PC-9 (cell line): ENCODE measurements at regions of chr17 and their contacts with region 1.

Region 1: DNA sequence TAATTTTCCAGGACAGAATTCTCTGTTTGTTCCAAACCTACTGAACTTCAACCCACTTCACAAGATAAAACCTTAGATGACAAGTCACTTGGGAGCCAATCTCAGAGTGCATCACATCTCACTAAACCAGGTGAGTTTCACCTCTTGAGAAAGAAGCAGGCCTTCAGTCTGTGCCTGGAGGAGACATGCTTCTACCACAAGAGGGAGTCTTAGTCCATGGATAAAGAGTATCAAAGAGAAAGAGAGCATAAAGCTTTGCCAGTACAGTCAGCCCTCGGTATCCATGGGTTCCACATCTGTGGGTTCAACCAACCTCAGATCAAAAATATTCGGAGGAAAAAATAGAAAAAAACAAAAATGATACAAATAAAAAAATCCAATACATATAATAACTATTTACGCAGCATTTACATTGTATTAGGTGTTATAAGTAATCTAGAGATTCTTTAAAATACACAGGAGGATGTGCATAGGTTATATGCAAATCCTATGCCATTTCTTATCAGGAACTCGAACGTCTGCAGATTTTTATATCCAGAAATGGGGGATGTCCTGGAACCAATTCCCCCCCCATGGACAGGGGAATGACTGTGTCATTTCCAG is 37.7 kb downstream of the DUSP14 start:
- DNase-seq: peak in 1 of 2 experiments; percentile 12
- H3K4me3 ChIP-seq: no peak overlapping the region
- H3K27ac ChIP-seq: no peak overlapping the region
- H3K4me1 ChIP-seq: no peaks in the 10 kb centered on the region
- H3K27me3 ChIP-seq: no peaks in the 10 kb centered on the region
- CTCF ChIP-seq: peak; percentile 86

Region 2: GRCh38 chr17:37476431-37477120 is 50.8 kb before region 1 on chr17:
- CTCF ChIA-PET with region 1: no interaction called
- POLR2A ChIA-PET with region 1: no interaction called
- intact Hi-C with region 1: no loop called
- DNase-seq: peak; percentile 60 to 97
- H3K4me3 ChIP-seq: peak overlapping the region; percentile 15; the same call in 1 of the 2 replicates
- H3K27ac ChIP-seq: peak overlapping the region; percentile 95
- H3K4me1 ChIP-seq: peaks cover 46% of the 10 kb centered on the region
- H3K27me3 ChIP-seq: no peaks in the 10 kb centered on the region
- CTCF ChIP-seq: no peak

Region 3: GRCh38 chr17:37546302-37546701 is 19.0 kb after region 1 on chr17:
- CTCF ChIA-PET with region 1: no interaction called
- POLR2A ChIA-PET with region 1: no interaction called
- intact Hi-C with region 1: no loop called
- DNase-seq: no peak
- H3K4me3 ChIP-seq: no peak overlapping the region
- H3K27ac ChIP-seq: no peak overlapping the region
- H3K4me1 ChIP-seq: peaks cover 6% of the 10 kb centered on the region; the same call in 1 of the 2 replicates
- H3K27me3 ChIP-seq: no peaks in the 10 kb centered on the region
- CTCF ChIP-seq: no peak

Region 4: DNA sequence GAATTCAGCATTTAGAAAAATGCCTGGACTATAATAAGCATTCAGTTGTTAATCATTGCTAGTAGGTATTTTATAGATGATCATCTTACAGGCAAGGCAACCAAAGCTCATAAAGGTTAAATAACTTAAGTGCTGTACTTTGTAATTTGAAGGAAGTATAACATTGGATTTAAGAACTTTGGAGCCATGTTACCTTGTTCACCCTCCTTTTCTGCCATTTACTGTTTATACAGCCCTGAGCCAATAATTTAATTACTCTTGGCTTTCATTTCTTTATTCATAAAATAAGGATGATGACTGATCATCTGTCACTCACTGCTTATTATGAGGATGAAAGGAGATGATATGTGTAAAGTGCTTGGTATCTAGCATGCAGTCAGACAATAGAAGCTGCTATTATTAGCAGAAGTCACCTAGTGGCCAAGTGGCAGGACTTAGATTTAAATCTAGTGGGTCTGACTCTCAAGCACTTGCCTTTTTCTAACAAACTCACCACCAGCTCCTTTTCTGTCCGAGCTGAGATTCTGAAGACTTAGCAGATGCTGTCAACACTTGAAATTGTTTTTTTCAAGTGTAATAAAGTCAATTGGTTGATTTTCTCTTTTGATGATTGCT is 134.2 kb after region 1 on chr17:
- CTCF ChIA-PET with region 1: no interaction called
- POLR2A ChIA-PET with region 1: no interaction called
- intact Hi-C with region 1: no loop called
- DNase-seq: no peak
- H3K4me3 ChIP-seq: no peak overlapping the region
- H3K27ac ChIP-seq: no peak overlapping the region
- H3K4me1 ChIP-seq: no peaks in the 10 kb centered on the region
- H3K27me3 ChIP-seq: no peaks in the 10 kb centered on the region
- CTCF ChIP-seq: no peak

Region 5: GRCh38 chr17:37818689-37819088 is 291.3 kb after region 1 on chr17:
- CTCF ChIA-PET with region 1: interaction called, 3 read pairs
- POLR2A ChIA-PET with region 1: interaction called, 3 read pairs
- intact Hi-C with region 1: loop called (anchors 5 kb)
- DNase-seq: peak; percentile 73 to 77
- H3K4me3 ChIP-seq: no peak overlapping the region
- H3K27ac ChIP-seq: no peak overlapping the region
- H3K4me1 ChIP-seq: no peaks in the 10 kb centered on the region
- H3K27me3 ChIP-seq: 0 out of 2 replicates have a peak, but pooled peaks cover 4% of the 10 kb centered on the region
- CTCF ChIP-seq: no peak